PC-9 (cell line): ENCODE measurements at regions of chr2 and their contacts with region 1.

Region 1: GRCh38 chr2:108184419-108184818 is 55.3 kb upstream of the SULT1C3 start:
- DNase-seq: no peak
- H3K4me3 ChIP-seq: no peak overlapping the region
- H3K27ac ChIP-seq: no peak overlapping the region
- H3K4me1 ChIP-seq: no peaks in the 10 kb centered on the region
- H3K27me3 ChIP-seq: peaks cover 4% of the 10 kb centered on the region; the same call in 1 of the 2 replicates
- CTCF ChIP-seq: peak; percentile 56

Region 2: DNA sequence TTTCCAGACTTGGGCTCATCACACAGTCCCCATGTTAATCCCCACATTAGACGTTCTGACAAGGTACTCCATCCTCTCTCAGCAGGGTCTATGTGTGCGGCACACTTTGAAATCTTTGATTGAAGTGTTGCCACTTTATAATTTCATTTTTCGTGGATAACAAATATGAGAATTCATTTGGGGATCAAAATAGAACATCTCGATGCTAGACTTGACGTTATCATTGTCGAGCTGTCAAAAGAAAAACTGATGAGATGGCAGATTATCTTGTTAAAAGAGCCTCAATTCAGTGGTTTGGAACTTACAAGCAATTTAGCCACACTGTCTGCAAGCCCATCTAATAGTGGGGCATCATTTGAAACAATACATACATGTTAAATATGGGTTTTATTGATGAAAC is 35.9 kb before region 1 on chr2:
- CTCF ChIA-PET with region 1: no interaction called
- POLR2A ChIA-PET with region 1: no interaction called
- intact Hi-C with region 1: loop called (anchors 1 kb)
- DNase-seq: no peak
- H3K4me3 ChIP-seq: no peak overlapping the region
- H3K27ac ChIP-seq: no peak overlapping the region
- H3K4me1 ChIP-seq: no peaks in the 10 kb centered on the region
- H3K27me3 ChIP-seq: peaks cover 20% of the 10 kb centered on the region
- CTCF ChIP-seq: no peak

Region 3: GRCh38 chr2:108297436-108298141 is 113.2 kb after region 1 on chr2:
- CTCF ChIA-PET with region 1: no interaction called
- POLR2A ChIA-PET with region 1: no interaction called
- intact Hi-C with region 1: no loop called
- DNase-seq: peak in 1 of 2 experiments; percentile 10
- H3K4me3 ChIP-seq: no peak overlapping the region
- H3K27ac ChIP-seq: no peak overlapping the region
- H3K4me1 ChIP-seq: peaks cover 10% of the 10 kb centered on the region
- H3K27me3 ChIP-seq: no peaks in the 10 kb centered on the region
- CTCF ChIP-seq: no peak